Left lung (tissue), 14 donors: ENCODE measurements at regions of chr6 and their contacts with region 1.

Region 1: GRCh38 chr6:146857180-146857979 is 258.6 kb downstream of the ADGB start:
- DNase-seq: peak; percentile 81 to 97 (median 88)
- ATAC-seq: peak; percentile 100
- H3K4me3 ChIP-seq: peak overlapping the region in 1 of 2 donors; percentile 24
- H3K27ac ChIP-seq: peak overlapping the region in 1 of 2 donors; percentile 54
- H3K4me1 ChIP-seq: peaks cover 0 to 6% of the 10 kb centered on the region in 2 donors
- H3K27me3 ChIP-seq: no peaks in the 10 kb centered on the region
- CTCF ChIP-seq: peak; percentile 97 to 98

Region 2: DNA sequence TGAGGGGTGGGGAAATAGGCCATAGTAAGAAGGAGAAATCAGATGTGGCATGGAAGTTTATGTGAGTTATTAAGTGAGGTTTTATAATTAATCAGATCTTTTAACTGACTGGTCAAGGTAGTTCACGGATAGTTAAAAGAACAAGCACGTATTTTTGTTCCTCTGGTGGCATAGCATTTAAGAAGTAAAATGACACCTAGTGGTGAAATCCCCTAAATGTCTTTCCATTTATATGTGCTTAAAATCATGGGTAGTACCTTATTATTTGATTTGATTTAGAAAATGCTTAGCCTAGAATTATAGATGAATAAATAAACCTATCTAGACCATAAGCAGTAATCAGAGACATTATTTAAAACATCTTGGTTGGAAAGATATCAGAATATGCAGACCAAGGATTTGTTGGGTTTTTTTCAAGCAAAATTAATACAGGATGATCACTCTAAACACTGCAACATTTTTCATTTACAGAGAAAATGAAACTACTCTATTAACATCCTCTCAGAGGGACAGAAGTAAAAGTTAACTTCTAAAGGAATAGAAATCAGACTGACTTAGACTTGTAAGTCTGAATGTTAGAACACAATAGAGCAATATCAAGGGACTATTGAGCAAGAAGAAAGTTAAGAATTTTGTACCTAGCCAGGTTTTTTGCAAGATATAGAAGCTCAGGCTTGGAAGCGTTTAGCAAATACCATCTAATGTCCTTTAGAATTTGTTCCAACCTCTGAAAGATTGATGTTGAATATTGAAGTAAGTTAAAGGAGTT is 427.9 kb after region 1 on chr6:
- intact Hi-C with region 1: loop called in 1 of 2 experiments (anchors 10 kb)
- DNase-seq: peak in 2 of 4 donors; percentile 18 to 32
- ATAC-seq: peak; percentile 64
- H3K4me3 ChIP-seq: no peak overlapping the region
- H3K27ac ChIP-seq: no peak overlapping the region
- H3K4me1 ChIP-seq: peaks cover 0 to 13% of the 10 kb centered on the region in 2 donors
- H3K27me3 ChIP-seq: no peaks in the 10 kb centered on the region
- CTCF ChIP-seq: peak; percentile 46 to 55